AG04449 (cell line): ENCODE measurements at regions of chr19 and their contacts with region 1.

Region 1: GRCh38 chr19:19176950-19177349 is 6.9 kb upstream of the MEF2B start:
- DNase-seq: no peak
- H3K4me3 ChIP-seq: no peak overlapping the region
- CTCF ChIP-seq: no peak

Region 2: DNA sequence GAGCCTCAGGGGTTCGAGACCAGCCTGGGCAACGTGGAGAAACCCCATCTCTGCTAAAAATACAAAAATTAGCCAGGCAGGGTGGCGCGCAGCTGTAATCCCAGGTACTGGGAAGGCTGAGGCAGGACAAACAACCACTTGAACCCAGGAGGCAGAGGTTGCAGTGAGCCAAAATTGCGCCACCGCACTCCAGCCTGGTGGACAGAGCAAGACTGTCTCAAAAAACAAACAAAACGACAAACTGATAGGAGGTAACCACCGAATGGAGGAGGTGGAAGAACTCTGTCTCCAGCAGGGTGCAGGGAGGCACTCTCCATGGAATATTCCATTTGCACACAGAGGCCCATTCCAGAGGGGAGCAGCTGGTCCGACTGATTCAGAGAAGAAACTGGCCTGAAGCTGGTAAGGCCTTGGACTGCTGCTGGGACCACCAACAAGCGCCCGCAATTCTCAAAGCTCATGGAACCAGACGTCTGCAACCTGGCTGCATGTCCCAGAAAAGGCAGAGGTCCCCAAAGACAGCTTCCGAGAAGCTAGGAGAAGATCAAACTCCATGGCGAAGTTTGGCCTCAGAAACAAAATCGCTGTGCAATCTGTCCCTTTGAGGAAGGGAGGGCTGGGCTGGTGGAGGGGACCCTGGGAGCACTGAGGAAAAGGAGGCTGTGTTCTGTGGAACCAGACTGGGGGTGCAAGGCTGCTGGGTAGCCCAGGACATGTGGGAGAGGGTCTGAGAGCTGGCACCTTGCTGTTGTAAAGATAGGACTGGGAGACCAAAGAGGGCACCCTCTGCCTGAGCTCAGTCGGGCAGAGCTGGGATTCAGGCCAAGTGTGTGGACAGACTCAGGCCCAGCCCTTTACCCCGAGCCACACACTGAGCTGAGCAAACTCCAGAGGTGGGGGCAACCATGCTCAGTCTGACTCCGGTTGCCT is 78.0 kb before region 1 on chr19:
- CTCF ChIA-PET with region 1: no interaction called
- POLR2A ChIA-PET with region 1: no interaction called
- DNase-seq: no peak
- H3K4me3 ChIP-seq: no peak overlapping the region
- CTCF ChIP-seq: no peak

Region 3: GRCh38 chr19:19138169-19138981 is 38.6 kb before region 1 on chr19 and contains the start of gene TMEM161A:
- CTCF ChIA-PET with region 1: interaction called, 49 read pairs
- POLR2A ChIA-PET with region 1: no interaction called
- DNase-seq: peak; percentile 96
- H3K4me3 ChIP-seq: peak within 1 kb of the TSS; percentile 69
- CTCF ChIP-seq: no peak

Region 4: DNA sequence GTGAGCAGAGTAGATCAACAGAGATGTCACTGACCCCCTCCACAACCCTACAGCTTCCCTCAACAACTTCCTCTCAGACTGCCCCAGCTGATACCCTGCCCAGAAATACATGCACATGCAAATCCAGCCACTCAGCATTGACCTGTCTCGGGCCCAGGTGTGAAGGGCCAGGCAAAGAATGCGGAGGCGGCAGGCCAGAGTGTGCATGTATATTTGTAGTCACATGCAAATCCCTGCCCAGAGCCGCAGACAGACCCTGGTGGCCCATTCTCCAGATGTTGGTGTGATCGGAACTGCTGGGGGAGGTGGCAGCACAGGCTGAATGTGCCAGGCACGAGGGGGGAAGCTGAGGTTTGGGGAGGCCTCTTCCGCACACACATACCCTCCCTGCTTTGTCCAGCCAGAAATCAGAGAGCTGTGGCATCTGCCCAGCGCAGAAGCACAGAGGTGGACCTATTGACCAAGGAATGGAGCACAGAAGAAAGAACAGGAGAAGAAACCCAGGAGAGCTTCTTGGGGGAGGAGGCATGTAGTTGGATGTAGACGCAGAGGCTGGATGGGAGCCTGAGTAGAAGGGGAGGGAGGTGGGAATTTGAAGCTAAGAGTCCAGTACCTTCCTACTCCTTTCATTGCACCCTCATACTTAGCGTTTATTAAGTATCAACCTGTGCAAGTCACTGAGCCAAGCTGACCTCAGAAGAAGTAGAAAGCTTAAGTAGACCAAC is 21.3 kb before region 1 on chr19:
- CTCF ChIA-PET with region 1: interaction called, 105 read pairs
- POLR2A ChIA-PET with region 1: no interaction called
- DNase-seq: no peak
- H3K4me3 ChIP-seq: no peak overlapping the region
- CTCF ChIP-seq: no peak

Region 5: DNA sequence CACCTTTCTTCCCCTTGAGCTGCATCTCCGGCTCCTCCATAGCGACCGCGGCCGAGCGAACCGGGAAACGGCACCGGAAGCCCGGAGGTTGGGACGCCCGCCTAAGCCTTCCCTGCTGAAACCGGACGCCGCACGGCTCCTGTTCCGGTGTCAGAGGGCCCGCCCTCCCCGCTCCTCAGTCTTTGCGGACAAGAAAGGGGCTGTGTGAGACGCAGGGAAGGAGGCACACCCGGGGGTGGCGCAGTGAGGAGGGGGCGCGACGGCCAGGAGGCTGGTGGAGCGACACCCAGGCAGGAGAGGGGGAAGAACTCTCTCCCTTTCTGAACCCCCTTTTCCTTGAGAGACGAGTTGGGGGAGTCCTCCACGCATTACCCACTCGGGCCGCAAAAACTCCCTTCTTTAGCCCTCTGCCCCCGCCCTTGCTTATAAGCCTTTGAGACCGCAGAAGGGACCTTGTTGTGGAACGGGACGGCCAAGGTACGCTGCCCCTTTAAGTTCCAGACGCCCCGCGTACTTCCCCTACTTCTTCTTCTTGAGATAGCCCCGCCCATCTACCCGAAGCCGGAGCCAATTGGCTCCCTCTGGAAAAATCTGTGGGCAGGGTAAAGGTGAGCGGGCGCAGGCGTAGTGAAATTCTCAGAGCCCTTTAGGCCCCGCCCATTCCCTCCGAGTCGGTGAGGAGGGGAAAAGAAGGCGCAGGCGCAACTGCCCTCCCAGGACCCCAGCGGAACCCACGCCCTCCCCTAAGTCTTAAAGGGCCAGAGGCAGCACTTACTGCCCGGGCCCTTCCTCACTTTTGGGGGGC is 15.3 kb after region 1 on chr19 and contains the starts of genes BORCS8 and RFXANK:
- CTCF ChIA-PET with region 1: interaction called, 51 read pairs
- POLR2A ChIA-PET with region 1: interaction called, 3 read pairs
- DNase-seq: peak; percentile 89
- H3K4me3 ChIP-seq: peak within 1 kb of the TSS; percentile 90
- CTCF ChIP-seq: no peak

Region 6: GRCh38 chr19:19224852-19225494 is 48.0 kb after region 1 on chr19:
- CTCF ChIA-PET with region 1: interaction called, 13 read pairs
- POLR2A ChIA-PET with region 1: no interaction called
- DNase-seq: no peak
- H3K4me3 ChIP-seq: peak overlapping the region; percentile 33; the same call in 1 of the 2 replicates
- CTCF ChIP-seq: peak; percentile 76